ENCODE measurements at regions of chr5 and their contacts with region 1.

Region 1: DNA sequence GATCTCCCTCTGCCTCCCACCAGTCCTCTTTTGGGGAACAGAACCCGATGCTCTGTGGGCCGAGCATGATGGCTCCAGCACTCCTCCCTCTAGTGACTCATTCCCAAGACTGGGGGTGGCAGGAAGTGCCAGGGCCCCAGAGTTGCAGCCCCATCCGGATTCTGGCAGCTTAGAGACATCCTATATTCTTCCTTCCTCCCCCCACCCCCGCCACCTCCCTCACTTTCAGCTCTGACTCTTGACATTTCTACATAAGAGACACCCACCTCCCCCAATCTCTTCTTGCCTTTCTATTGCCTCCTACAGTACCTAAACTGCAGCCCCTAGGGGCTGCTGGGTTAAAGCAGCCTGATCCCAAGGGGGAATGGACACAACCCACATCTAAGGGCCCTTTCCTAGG is 47.1 kb upstream of the MATR3 start:
- DNase-seq: no peak
- H3K4me3 ChIP-seq: no peak overlapping the region
- H3K27ac ChIP-seq: no peak overlapping the region
- H3K4me1 ChIP-seq: no peaks in the 10 kb centered on the region
- H3K27me3 ChIP-seq: no peaks in the 10 kb centered on the region
- CTCF ChIP-seq: no peak
- EP300 ChIP-seq: no peak
- POLR2A ChIP-seq: no peak

Region 2: GRCh38 chr5:138789771-138790242 is 456.6 kb before region 1 on chr5:
- intact Hi-C with region 1: no loop called
- DNase-seq: no peak
- H3K4me3 ChIP-seq: no peak overlapping the region
- H3K27ac ChIP-seq: no peak overlapping the region
- H3K4me1 ChIP-seq: peaks cover 55 to 81% (median 71%) of the 10 kb centered on the region in 4 donors
- H3K27me3 ChIP-seq: no peaks in the 10 kb centered on the region
- CTCF ChIP-seq: peak in 2 of 3 experiments; percentile 38 to 47
- EP300 ChIP-seq: no peak
- POLR2A ChIP-seq: no peak

Region 3: DNA sequence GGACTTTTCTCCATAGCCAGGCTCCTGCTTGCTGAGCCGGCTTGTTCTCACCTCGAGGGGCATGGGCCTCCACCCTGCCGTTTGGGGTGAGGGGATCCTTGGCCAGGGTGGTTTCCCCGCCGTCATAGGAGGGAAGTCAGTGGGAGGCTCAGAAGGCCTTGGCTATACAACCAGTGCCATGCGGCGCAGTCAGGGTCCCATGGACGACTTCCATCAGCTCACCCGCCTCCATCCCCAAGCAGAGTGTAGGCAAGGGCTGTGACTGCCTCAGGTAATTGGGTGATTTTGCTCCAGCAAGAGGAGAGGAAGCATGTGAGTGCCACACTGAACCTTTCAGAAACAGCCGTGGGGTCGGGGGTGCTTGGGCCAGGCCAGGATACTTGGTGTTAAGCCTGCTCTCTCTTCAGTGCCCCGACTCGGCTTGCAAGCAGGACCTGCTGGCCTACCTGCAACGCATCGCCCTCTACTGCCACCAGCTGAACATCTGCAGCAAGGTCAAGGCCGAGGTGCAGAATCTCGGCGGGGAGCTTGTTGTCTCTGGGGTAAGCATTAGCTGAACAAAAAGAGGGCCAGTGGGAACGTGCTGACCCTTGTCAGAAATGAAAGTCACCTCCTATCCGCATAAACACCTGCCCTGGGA is 314.1 kb before region 1 on chr5:
- intact Hi-C with region 1: no loop called
- DNase-seq: no peak
- H3K4me3 ChIP-seq: no peak overlapping the region
- H3K27ac ChIP-seq: no peak overlapping the region
- H3K4me1 ChIP-seq: peaks cover 19 to 37% (median 22%) of the 10 kb centered on the region in 4 donors
- H3K27me3 ChIP-seq: no peaks in the 10 kb centered on the region
- CTCF ChIP-seq: no peak
- EP300 ChIP-seq: no peak
- POLR2A ChIP-seq: no peak

Region 4: GRCh38 chr5:139207297-139208000 is 38.9 kb before region 1 on chr5:
- intact Hi-C with region 1: loop called (anchors 5 kb)
- DNase-seq: no peak
- H3K4me3 ChIP-seq: no peak overlapping the region
- H3K27ac ChIP-seq: no peak overlapping the region
- H3K4me1 ChIP-seq: peaks cover 0 to 5% (median 0%) of the 10 kb centered on the region in 4 donors
- H3K27me3 ChIP-seq: no peaks in the 10 kb centered on the region
- CTCF ChIP-seq: no peak
- EP300 ChIP-seq: no peak
- POLR2A ChIP-seq: no peak

Region 5: DNA sequence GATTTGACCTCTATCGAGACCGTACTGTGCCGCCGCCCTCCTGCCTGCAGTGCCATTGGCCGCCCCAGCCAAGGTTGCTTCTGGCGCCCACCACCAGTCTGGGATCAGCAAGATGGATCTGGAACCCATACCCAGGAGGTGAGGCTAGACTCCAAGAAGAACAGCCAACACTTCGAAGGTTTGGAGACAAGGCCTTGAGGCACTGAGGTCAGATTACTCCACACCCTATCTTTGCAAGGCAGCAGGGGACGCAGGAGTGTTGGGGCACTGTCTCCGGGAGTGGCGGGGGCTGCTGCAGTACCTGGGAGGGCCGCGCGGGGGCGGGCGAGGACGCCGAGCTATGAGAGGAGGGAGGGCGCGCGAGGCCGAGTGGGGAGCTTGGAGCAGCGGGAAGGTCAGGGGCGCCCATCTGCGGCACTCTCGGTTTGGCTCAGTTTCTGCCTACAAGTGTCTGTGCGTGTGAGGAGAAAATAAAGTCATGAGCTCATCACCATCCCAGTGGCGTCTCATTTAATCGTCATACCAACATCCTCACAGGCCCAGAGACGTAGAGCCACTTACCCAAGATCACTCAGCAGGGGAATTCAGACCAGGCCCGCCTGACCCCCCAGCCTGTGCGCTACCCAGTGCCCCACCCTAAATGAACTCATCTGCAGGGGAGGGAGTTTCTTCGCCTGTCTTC is 528.7 kb after region 1 on chr5:
- intact Hi-C with region 1: no loop called
- DNase-seq: no peak
- H3K4me3 ChIP-seq: peak overlapping the region in 1 of 4 donors; percentile 22
- H3K27ac ChIP-seq: no peak overlapping the region
- H3K4me1 ChIP-seq: peaks cover 4 to 9% (median 8%) of the 10 kb centered on the region in 4 donors
- H3K27me3 ChIP-seq: no peaks in the 10 kb centered on the region
- CTCF ChIP-seq: peak; percentile 87 to 98 (median 88)
- EP300 ChIP-seq: no peak
- POLR2A ChIP-seq: no peak